Activated CD4-positive, alpha-beta T cell treated with anti-CD3 and anti-CD28 coated beads, Interleukin-2, amount 10 ng/mL, durations not matched to agents 24 days and 14 days (primary cell): ENCODE measurements at regions of chr3 and their contacts with region 1.

Region 1: DNA sequence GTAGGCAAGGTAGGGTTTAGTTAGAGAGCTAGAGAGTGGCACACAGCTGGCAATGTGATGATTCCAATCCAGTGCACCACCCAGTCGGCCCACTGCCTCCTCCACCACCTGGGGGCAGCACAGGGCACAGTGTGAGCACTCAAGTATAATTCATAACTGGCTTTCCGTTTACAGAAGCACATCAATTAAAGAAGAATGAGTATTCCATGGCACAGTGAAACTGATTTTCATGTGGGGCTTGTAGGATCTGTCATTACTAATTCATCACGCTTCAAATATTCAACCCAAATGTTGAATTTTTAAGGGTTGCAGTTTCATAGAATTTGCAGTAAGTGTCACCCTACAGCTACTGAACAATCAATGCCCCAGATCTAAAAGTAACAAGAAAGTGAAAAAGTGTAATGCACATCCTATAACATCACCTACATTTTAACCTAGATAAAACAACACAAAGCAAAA is 149.9 kb downstream of the IGSF11 start:
- DNase-seq: peak; percentile 92
- H3K4me3 Mint-ChIP-seq: no peak overlapping the region
- H3K27ac Mint-ChIP-seq: no peak overlapping the region
- H3K4me1 Mint-ChIP-seq: peaks cover 2% of the 10 kb centered on the region
- H3K27me3 Mint-ChIP-seq: peaks cover 19% of the 10 kb centered on the region

Region 2: GRCh38 chr3:118772547-118773011 is 112.2 kb before region 1 on chr3:
- intact Hi-C with region 1: no loop called
- DNase-seq: no peak
- H3K4me3 Mint-ChIP-seq: no peak overlapping the region
- H3K27ac Mint-ChIP-seq: no peak overlapping the region
- H3K4me1 Mint-ChIP-seq: no peaks in the 10 kb centered on the region
- H3K27me3 Mint-ChIP-seq: no peaks in the 10 kb centered on the region

Region 3: DNA sequence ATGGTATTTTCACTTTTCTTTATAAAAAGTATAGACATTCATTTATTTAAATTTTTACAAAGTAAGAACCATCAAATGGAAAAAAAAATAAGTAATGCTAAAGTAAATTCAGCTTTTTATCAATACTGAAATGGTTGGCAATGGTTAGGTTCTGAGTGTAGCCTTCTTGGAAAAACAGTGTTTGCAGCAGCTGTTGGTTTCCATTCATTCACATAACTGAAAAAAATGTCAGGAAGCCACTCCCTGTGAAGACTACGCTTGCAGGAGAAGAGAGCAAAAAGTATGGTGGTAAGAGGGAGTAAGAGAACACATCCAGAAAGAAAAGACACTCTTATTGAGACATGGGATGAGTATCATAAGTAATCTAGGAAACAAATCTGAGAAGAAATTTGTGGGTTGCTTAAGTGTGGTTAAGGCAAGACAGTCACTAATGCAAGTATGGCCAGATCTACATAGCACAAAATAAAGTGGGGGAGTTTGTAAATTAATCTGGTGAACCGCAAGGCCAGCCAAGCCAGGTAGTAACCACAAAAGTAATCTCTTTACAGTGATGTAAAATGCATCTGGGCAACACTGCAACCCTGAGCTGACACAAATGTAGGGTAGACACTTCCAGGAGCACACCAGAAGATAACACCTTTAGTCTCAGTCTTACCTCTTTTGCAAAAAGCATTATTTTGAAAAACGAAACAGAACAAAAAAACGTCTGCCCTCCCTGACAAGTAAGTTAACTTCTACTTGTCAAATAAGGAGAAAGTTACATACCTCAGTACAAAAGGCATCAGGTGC is 16.2 kb after region 1 on chr3:
- intact Hi-C with region 1: no loop called
- DNase-seq: no peak
- H3K4me3 Mint-ChIP-seq: no peak overlapping the region
- H3K27ac Mint-ChIP-seq: no peak overlapping the region
- H3K4me1 Mint-ChIP-seq: peaks cover 3% of the 10 kb centered on the region
- H3K27me3 Mint-ChIP-seq: peaks cover 19% of the 10 kb centered on the region

Region 4: GRCh38 chr3:119098619-119099222 is 213.9 kb after region 1 on chr3:
- intact Hi-C with region 1: loop called (anchors 1 kb)
- DNase-seq: peak; percentile 77
- H3K4me3 Mint-ChIP-seq: no peak overlapping the region
- H3K27ac Mint-ChIP-seq: no peak overlapping the region
- H3K4me1 Mint-ChIP-seq: no peaks in the 10 kb centered on the region
- H3K27me3 Mint-ChIP-seq: no peaks in the 10 kb centered on the region

Region 5: DNA sequence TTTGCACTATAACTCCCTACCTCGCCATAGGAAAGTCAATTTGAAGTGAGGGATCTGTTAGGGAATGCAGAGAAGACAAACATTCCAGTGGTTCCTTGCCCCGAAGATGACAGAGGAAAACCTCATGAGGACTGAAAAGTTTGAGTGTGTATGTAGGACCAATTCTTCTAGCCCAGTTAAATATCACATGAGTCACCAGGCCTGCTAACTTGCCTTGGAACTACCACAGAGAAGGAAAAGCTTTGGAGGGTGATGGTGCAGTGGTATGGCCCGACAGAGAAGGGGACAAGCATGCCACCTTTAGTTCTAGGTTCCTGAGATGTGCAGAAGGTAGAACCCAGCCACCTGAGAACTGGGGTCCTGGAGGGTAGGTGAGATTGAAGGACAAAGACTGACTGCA is 286.0 kb after region 1 on chr3:
- intact Hi-C with region 1: no loop called
- DNase-seq: no peak
- H3K4me3 Mint-ChIP-seq: no peak overlapping the region
- H3K27ac Mint-ChIP-seq: no peak overlapping the region
- H3K4me1 Mint-ChIP-seq: no peaks in the 10 kb centered on the region
- H3K27me3 Mint-ChIP-seq: peaks cover 8% of the 10 kb centered on the region